Activated T-helper 2 cell treated with anti-CD3 and anti-CD28 coated beads, Interferon-gamma antibody, Interleukin-2, Interleukin-4, amounts not matched to agents 10 μg/mL and 5 μg/mL and 100 μg/mL, durations not matched to agents 14 hours and 24 hours and 36 hours (primary cell): ENCODE measurements at regions of chr5 and their contacts with region 1.

Region 1: GRCh38 chr5:180126726-180127681 is 55.4 kb upstream of the RNF130 start:
- DNase-seq: peak; percentile 8
- H3K4me3 Mint-ChIP-seq: no peak overlapping the region
- H3K27ac Mint-ChIP-seq: no peak overlapping the region
- H3K4me1 Mint-ChIP-seq: no peaks in the 10 kb centered on the region
- H3K27me3 Mint-ChIP-seq: peaks cover 2% of the 10 kb centered on the region

Region 2: GRCh38 chr5:179839328-179840256 is 287.4 kb before region 1 on chr5:
- intact Hi-C with region 1: no loop called
- DNase-seq: no peak
- H3K4me3 Mint-ChIP-seq: no peak overlapping the region
- H3K27ac Mint-ChIP-seq: no peak overlapping the region
- H3K4me1 Mint-ChIP-seq: peaks cover 15% of the 10 kb centered on the region
- H3K27me3 Mint-ChIP-seq: no peaks in the 10 kb centered on the region

Region 3: GRCh38 chr5:180209137-180209581 is 82.2 kb after region 1 on chr5 and contains the start of gene RASGEF1C:
- intact Hi-C with region 1: loop called (anchors 2 kb)
- DNase-seq: peak; percentile 58
- H3K4me3 Mint-ChIP-seq: peak within 1 kb of the TSS; percentile 30
- H3K27ac Mint-ChIP-seq: no peak within 1 kb of the TSS
- H3K4me1 Mint-ChIP-seq: peaks cover 2% of the 10 kb centered on the region
- H3K27me3 Mint-ChIP-seq: peaks cover 25% of the 10 kb centered on the region
- total RNA-seq, gene RASGEF1C: not detected in 2 replicates